ENCODE measurements at regions of chr1 and their contacts with region 1.

Region 1: DNA sequence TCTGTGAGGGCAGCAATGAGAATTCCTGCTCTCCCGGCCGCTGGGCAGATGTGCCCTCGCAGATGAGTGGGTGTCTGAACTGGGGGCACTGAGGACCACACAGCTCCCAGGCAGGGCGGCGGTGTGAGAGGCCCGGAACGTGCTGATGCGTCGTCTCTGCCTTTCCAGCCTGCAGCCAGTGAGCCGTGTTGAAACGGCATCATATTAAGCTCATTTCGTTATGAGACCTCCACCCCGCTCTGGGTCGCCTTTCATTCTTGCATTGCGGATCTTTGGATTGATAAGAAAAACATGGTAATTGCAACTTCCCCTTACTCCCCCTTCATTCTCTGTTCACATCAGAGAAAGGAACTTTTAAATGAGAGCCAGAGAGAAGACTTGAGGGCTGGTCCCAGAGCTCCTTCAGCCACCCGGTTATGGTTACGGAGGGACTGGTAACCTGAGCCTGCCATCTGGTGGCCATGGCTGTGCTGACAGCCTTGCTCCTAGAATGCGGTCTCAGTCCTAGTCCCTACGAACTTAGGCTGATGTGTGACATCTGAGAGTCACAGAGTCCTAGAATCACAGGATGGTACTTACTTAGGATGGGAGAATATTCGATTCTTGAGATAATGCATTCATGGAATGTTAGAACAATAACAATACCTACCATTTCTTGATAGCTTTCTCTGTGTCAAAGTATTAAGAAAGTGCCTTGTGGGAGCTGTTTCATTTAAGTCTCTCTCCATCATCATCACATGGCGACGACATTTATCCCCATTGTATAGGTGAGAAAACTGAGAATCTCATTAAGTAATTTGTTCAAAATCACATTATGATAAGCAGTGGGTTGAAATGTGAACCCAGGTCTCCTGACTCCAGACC is 271.0 kb downstream of the TRABD2B start:
- DNase-seq: peak; percentile 73 to 87 (median 80)
- H3K4me3 ChIP-seq: peak overlapping the region in 46 of 59 donors; percentile 1 to 56 (median 38)
- H3K27ac ChIP-seq: no peak overlapping the region
- H3K27me3 ChIP-seq: peaks cover 0 to 53% (median 32%) of the 10 kb centered on the region in 45 donors
- CTCF ChIP-seq: peak; percentile 29 to 96 (median 91)

Region 2: GRCh38 chr1:47179017-47179987 is 546.9 kb before region 1 on chr1:
- intact Hi-C with region 1: loop called in 1 of 2 experiments (anchors 5 kb)
- DNase-seq: peak; percentile 51 to 92 (median 84)
- H3K4me3 ChIP-seq: peak overlapping the region in 58 of 59 donors; percentile 22 to 70 (median 50)
- H3K27ac ChIP-seq: peak overlapping the region in 32 of 59 donors; percentile 4 to 85 (median 44)
- H3K27me3 ChIP-seq: peaks cover 0 to 21% (median 0%) of the 10 kb centered on the region in 45 donors
- CTCF ChIP-seq: peak; percentile 67 to 95 (median 86)

Region 3: GRCh38 chr1:47432071-47433036 is 293.9 kb before region 1 on chr1:
- intact Hi-C with region 1: loop called (anchors 2 to 5 kb)
- DNase-seq: peak in 9 of 10 donors; percentile 48 to 83 (median 71)
- H3K4me3 ChIP-seq: peak overlapping the region in 27 of 59 donors; percentile 0 to 48 (median 28)
- H3K27ac ChIP-seq: no peak overlapping the region
- H3K27me3 ChIP-seq: peaks cover 13 to 100% (median 91%) of the 10 kb centered on the region in 45 donors
- CTCF ChIP-seq: peak; percentile 29 to 88 (median 75)